ENCODE measurements at regions of chr17 and their contacts with region 1.

Region 1: GRCh38 chr17:75784473-75785015 is at the start of gene UNK:
- DNase-seq: peak; percentile 98
- H3K4me3 Mint-ChIP-seq: peak within 1 kb of the TSS; percentile 93
- H3K27ac Mint-ChIP-seq: peak within 1 kb of the TSS; percentile 100
- H3K4me1 Mint-ChIP-seq: peaks cover 44% of the 10 kb centered on the region
- H3K27me3 Mint-ChIP-seq: peaks cover 3% of the 10 kb centered on the region
- total RNA-seq, gene UNK: 28.9 and 30.0 TPM in 2 replicates

Region 2: DNA sequence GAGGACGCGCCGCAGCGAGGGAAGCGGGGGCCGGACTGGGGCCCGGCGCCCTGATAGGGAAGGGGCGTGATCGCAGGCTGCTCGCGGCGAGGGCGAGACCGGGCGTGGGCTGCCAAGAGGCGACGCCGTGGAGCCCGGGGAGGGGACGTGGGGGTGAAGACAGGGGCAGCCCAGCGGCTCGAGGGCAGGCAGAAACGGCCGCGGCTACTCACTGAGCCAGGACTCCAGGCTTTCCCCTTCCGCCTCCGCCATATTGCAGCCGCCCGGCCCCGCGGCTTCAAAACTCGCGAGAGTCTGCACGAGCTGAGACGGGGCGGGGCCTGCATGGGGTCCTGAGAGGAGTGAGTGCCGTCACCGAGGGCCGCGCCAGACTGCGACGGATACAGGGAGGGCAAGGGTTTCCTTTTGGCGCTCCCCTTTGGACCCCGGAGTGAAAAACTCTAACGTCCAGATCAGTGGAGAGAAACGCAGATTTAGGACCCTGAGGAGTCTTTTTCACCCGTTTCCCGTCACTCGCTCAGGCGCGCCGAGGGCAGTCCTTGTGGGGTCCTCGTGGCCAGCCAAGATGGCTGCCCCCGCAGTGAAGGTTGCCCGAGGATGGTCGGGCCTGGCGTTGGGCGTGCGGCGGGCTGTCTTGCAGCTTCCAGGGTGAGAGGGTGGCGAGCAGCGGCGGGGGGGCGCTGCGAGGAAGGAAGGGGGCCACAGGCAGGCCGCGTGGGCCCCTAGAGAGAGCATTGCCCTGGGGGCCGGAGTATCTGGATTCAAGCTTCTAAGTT is 523.0 kb before region 1 on chr17 and contains the starts of genes GGA3 and MRPS7:
- intact Hi-C with region 1: loop called (anchors 10 kb)
- DNase-seq: peak; percentile 99
- H3K4me3 Mint-ChIP-seq: peak within 1 kb of the TSS; percentile 94
- H3K27ac Mint-ChIP-seq: peak within 1 kb of the TSS; percentile 99
- H3K4me1 Mint-ChIP-seq: peaks cover 37% of the 10 kb centered on the region
- H3K27me3 Mint-ChIP-seq: no peaks in the 10 kb centered on the region
- total RNA-seq, gene GGA3: 84.2 and 86.9 TPM in 2 replicates
- total RNA-seq, gene MRPS7: 121 and 127 TPM in 2 replicates

Region 3: GRCh38 chr17:75855310-75856081 is 71.0 kb after region 1 on chr17 and contains the start of gene WBP2:
- intact Hi-C with region 1: loop called (anchors 1 kb)
- DNase-seq: peak; percentile 99
- H3K4me3 Mint-ChIP-seq: no peak within 1 kb of the TSS
- H3K27ac Mint-ChIP-seq: peak within 1 kb of the TSS; percentile 92
- H3K4me1 Mint-ChIP-seq: peaks cover 31% of the 10 kb centered on the region
- H3K27me3 Mint-ChIP-seq: no peaks in the 10 kb centered on the region
- total RNA-seq, gene WBP2: 68.9 and 70.0 TPM in 2 replicates

Region 4: GRCh38 chr17:76264755-76265596 is 480.4 kb after region 1 on chr17 and contains the start of gene UBALD2:
- intact Hi-C with region 1: loop called (anchors 10 kb)
- DNase-seq: peak; percentile 100
- H3K4me3 Mint-ChIP-seq: peak within 1 kb of the TSS; percentile 94
- H3K27ac Mint-ChIP-seq: peak within 1 kb of the TSS; percentile 95
- H3K4me1 Mint-ChIP-seq: peaks cover 56% of the 10 kb centered on the region
- H3K27me3 Mint-ChIP-seq: no peaks in the 10 kb centered on the region
- total RNA-seq, gene UBALD2: 184 and 189 TPM in 2 replicates